Activated T-helper 1 cell treated with anti-CD3 and anti-CD28 coated beads, Interleukin-12 subunit alpha, Interleukin-12 subunit beta, Interleukin-2, Interleukin-4 antibody, amounts not matched to agents 30 ng/mL and 10 ng/mL and 1 ng/mL, durations not matched to agents 14 hours and 24 hours and 36 hours (primary cell): ENCODE measurements at regions of chr7 and their contacts with region 1.

Region 1: DNA sequence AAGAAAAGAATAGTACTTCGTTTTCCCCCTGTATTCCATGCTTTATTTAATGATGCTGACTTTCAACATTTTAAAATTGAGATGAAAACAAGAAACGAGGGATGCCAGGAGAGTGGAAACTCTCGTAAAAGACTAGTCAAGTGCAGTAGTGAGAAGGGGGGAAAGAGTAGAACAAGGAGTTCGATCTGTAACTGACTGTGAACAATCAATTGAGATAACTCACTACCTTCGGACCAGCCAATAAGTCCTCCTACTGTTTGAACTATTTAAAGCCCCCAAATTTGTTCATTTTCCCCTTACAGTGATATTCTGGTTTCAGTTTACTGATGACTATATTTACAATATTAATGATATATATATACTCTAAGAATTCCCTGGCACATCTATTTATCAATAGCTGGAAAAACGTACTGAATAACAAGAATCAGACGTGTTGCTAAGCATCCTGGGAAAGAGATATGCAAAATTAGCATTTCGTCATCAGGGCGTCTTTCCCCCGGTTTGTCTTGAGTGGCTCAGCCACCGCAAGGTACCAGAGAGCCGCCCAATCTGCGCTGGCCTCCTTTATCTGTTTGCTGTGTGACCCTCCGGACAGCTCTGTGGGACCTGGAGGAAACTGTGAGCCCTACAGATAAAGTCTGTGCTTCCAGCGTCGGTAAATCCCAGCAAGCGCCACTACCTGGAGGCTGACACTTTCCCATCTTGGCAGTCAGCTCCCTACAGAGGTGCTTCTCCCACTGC is 41.1 kb downstream of the PDIA4 start:
- DNase-seq: peak; percentile 78
- H3K4me3 Mint-ChIP-seq: peak overlapping the region; percentile 94
- H3K27ac Mint-ChIP-seq: peak overlapping the region; percentile 92
- H3K4me1 Mint-ChIP-seq: peaks cover 46% of the 10 kb centered on the region
- H3K27me3 Mint-ChIP-seq: peaks cover 21% of the 10 kb centered on the region

Region 2: GRCh38 chr7:148503875-148504487 is 483.2 kb before region 1 on chr7:
- intact Hi-C with region 1: loop called (anchors 5 kb)
- DNase-seq: no peak
- H3K4me3 Mint-ChIP-seq: no peak overlapping the region
- H3K27ac Mint-ChIP-seq: no peak overlapping the region
- H3K4me1 Mint-ChIP-seq: peaks cover 7% of the 10 kb centered on the region
- H3K27me3 Mint-ChIP-seq: peaks cover 17% of the 10 kb centered on the region

Region 3: DNA sequence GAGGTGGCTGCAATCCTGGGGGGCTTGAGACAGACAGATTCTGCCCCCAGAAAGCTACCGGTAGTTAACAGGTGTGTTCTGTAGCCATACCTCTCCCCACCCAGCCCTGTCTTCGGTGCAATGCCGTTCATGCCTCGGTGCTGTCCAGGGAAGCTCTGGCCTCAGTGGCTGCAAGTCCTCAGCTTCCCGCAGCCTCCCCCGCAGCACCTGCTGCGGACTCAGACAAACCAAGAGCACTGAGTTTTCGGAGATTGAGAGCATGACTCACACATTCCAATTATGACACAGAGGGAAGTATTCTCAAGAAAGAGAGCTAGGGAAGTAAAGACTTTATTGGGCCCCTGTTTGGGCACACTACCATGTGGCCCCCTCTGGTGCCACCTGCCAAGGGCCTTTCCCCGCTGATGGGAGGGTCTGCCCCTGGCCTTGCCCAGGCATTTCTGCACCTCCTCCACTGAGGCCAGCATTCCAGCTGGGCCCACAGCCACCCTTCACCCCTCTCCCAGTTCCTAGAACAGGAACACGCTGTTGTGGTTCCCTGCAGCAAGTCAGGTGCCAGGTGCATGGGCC is 72.9 kb before region 1 on chr7:
- intact Hi-C with region 1: loop called (anchors 1 kb)
- DNase-seq: peak; percentile 34
- H3K4me3 Mint-ChIP-seq: peak overlapping the region; percentile 77
- H3K27ac Mint-ChIP-seq: peak overlapping the region; percentile 94
- H3K4me1 Mint-ChIP-seq: peaks cover 63% of the 10 kb centered on the region
- H3K27me3 Mint-ChIP-seq: peaks cover 2% of the 10 kb centered on the region

Region 4: GRCh38 chr7:149005241-149006050 is 18.3 kb after region 1 on chr7:
- intact Hi-C with region 1: no loop called
- DNase-seq: peak; percentile 65
- H3K4me3 Mint-ChIP-seq: no peak overlapping the region
- H3K27ac Mint-ChIP-seq: no peak overlapping the region
- H3K4me1 Mint-ChIP-seq: no peaks in the 10 kb centered on the region
- H3K27me3 Mint-ChIP-seq: no peaks in the 10 kb centered on the region

Region 5: DNA sequence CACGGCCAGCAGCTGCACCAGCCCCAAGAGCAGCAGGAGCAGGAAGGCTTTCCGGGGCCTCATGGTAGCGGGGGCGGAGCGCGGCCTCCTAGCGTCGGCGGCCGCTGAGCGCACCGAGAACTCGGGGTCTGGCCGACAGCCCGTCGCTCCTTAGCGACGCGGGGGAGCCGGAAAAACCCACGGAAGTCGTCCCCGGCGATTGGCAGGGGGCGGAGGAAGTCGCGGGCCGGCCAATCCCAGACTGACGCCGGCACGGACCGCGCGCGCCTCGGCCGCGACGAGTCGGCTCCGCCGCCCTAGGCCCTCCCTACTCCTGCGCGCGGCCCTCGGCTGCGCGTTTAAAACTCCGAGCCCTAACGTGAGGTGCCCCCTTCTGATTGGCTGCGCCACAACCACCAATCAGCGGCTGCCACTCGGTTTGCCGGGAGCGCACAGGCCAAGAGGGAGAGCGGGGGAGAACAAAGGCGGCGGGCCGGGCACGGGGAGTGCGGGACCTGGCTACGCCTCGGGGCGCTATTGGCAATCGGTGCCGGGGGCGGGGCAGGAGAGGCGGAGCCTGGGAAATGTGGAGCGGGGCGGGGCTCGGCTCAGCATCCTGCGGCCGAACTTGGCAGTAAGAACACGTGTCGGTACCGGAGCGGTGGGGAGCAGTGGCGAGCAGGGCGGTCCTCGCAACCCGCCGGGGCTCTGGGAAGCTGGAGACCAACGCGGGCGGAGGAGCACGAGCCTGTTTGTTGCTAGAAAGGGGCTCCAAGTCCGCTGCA is 41.3 kb after region 1 on chr7 and contains the start of gene PDIA4:
- intact Hi-C with region 1: loop called (anchors 1 kb)
- DNase-seq: peak; percentile 100
- H3K4me3 Mint-ChIP-seq: peak within 1 kb of the TSS; percentile 98
- H3K27ac Mint-ChIP-seq: peak within 1 kb of the TSS; percentile 93
- H3K4me1 Mint-ChIP-seq: peaks cover 34% of the 10 kb centered on the region
- H3K27me3 Mint-ChIP-seq: peaks cover 2% of the 10 kb centered on the region
- total RNA-seq, gene PDIA4: 132 and 142 TPM in 2 replicates

Region 6: GRCh38 chr7:149090397-149091195 is 103.4 kb after region 1 on chr7 and contains the start of gene ZNF786:
- intact Hi-C with region 1: loop called (anchors 1 kb)
- DNase-seq: peak; percentile 87
- H3K4me3 Mint-ChIP-seq: peak within 1 kb of the TSS; percentile 99
- H3K27ac Mint-ChIP-seq: peak within 1 kb of the TSS; percentile 100
- H3K4me1 Mint-ChIP-seq: peaks cover 17% of the 10 kb centered on the region
- H3K27me3 Mint-ChIP-seq: peaks cover 2% of the 10 kb centered on the region
- total RNA-seq, gene ZNF786: 9.9 and 10.9 TPM in 2 replicates